PC-9 (cell line): ENCODE measurements at regions of chr3 and their contacts with region 1.

Region 1: GRCh38 chr3:177197041-177197727 is at the start of gene TBL1XR1:
- DNase-seq: peak; percentile 92 to 96
- H3K4me3 ChIP-seq: peak within 1 kb of the TSS; percentile 82
- H3K27ac ChIP-seq: peak within 1 kb of the TSS; percentile 97
- H3K4me1 ChIP-seq: peaks cover 44% of the 10 kb centered on the region
- H3K27me3 ChIP-seq: no peaks in the 10 kb centered on the region
- CTCF ChIP-seq: no peak
- total RNA-seq, gene TBL1XR1: 232 and 243 TPM in 2 replicates

Region 2: GRCh38 chr3:177050501-177051237 is 146.5 kb before region 1 on chr3:
- CTCF ChIA-PET with region 1: no interaction called
- POLR2A ChIA-PET with region 1: interaction called, 4 read pairs
- intact Hi-C with region 1: loop called (anchors 1 kb)
- DNase-seq: peak in 1 of 2 experiments; percentile 59
- H3K4me3 ChIP-seq: no peak overlapping the region
- H3K27ac ChIP-seq: peak overlapping the region; percentile 40
- H3K4me1 ChIP-seq: peaks cover 15% of the 10 kb centered on the region
- H3K27me3 ChIP-seq: no peaks in the 10 kb centered on the region
- CTCF ChIP-seq: peak; percentile 90

Region 3: DNA sequence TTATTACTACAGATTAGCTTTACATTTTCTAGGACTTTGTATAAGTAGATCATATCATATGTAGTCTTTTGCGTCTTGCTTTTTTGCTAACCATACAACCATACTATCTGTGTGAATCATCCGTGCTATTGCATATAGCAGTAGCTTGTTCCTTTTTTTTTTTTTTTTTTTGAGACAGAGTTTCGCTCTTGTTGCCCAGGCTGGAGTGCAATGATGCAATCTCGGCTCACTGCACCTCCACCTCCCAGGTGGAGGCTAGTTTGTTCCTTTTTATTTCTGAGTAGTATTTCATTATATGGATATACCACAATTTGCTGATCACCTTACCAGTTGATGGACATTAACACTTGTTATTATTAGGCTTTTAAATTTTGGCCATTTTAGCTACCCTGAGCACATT is 54.6 kb after region 1 on chr3:
- CTCF ChIA-PET with region 1: no interaction called
- POLR2A ChIA-PET with region 1: no interaction called
- intact Hi-C with region 1: no loop called
- DNase-seq: no peak
- H3K4me3 ChIP-seq: no peak overlapping the region
- H3K27ac ChIP-seq: no peak overlapping the region
- H3K4me1 ChIP-seq: peaks cover 18% of the 10 kb centered on the region
- H3K27me3 ChIP-seq: no peaks in the 10 kb centered on the region
- CTCF ChIP-seq: no peak

Region 4: DNA sequence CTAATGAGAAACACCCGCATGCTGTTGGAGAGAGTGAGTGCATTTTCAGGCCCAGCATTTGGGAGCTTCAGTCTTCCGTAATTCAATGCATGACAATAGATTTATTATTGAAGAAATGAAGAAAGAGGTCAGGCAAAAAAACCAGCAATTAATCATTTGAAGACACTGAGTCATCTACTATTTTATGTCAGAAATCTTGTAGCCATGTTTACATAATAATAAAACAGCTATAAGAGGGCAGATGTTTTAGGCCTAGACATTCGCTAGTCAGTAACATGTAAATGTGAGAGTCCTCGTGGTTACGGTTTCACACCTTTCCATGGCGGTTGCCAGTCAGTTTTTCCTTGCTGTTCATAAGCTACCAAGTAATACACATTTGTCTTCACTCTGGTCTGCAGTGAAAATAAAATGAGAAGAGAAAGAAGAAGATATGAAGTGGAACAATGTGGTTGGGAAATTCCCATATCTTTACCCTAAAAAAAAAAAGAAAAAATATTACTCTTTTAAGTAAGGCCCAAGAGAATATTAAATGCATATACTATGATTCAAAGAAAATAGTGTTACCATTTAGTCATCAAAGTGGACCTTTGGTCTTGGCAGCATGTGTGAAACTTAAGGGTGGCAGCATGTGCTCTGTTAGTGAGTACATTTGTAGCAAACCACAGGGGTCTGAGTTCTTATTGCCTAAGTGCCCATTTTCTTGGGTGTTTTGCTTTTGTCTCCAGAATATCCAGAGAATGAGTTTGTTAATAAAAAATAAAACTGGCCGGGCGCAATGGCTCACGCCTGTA is 140.6 kb after region 1 on chr3:
- CTCF ChIA-PET with region 1: no interaction called
- POLR2A ChIA-PET with region 1: interaction called, 16 read pairs
- intact Hi-C with region 1: no loop called
- DNase-seq: no peak
- H3K4me3 ChIP-seq: no peak overlapping the region
- H3K27ac ChIP-seq: no peak overlapping the region
- H3K4me1 ChIP-seq: peaks cover 56% of the 10 kb centered on the region
- H3K27me3 ChIP-seq: no peaks in the 10 kb centered on the region
- CTCF ChIP-seq: no peak

Region 5: GRCh38 chr3:177448987-177449975 is 252.1 kb after region 1 on chr3:
- CTCF ChIA-PET with region 1: interaction called, 3 read pairs
- POLR2A ChIA-PET with region 1: interaction called, 4 read pairs
- intact Hi-C with region 1: loop called (anchors 1 kb)
- DNase-seq: peak; percentile 82 to 99
- H3K4me3 ChIP-seq: peak overlapping the region; percentile 9; the same call in 1 of the 2 replicates
- H3K27ac ChIP-seq: peak overlapping the region; percentile 89
- H3K4me1 ChIP-seq: peaks cover 66% of the 10 kb centered on the region
- H3K27me3 ChIP-seq: no peaks in the 10 kb centered on the region
- CTCF ChIP-seq: no peak

Region 6: DNA sequence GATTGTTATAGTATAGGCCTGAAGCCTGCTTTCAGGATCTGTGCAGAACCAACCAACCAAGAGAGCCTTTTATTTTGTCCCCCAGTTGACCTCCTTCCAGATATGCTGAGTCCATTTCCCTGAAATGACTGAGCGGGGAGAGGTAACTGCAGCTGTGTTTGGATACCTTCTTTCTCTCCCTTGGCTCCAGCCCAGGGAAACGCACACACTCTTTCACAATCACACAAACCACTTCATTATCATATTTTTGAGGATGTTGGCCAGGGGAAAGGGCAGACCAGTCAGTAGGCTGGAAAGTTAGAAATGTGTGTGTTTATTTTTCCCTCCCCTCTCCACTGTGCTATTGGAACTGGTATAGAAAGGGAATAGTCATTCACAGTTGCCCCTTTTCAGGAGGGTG is 417.8 kb after region 1 on chr3:
- CTCF ChIA-PET with region 1: no interaction called
- POLR2A ChIA-PET with region 1: no interaction called
- intact Hi-C with region 1: loop called (anchors 5 kb)
- DNase-seq: peak; percentile 84 to 96
- H3K4me3 ChIP-seq: no peak overlapping the region
- H3K27ac ChIP-seq: peak overlapping the region; percentile 62
- H3K4me1 ChIP-seq: peaks cover 87% of the 10 kb centered on the region
- H3K27me3 ChIP-seq: no peaks in the 10 kb centered on the region
- CTCF ChIP-seq: no peak

Region 7: DNA sequence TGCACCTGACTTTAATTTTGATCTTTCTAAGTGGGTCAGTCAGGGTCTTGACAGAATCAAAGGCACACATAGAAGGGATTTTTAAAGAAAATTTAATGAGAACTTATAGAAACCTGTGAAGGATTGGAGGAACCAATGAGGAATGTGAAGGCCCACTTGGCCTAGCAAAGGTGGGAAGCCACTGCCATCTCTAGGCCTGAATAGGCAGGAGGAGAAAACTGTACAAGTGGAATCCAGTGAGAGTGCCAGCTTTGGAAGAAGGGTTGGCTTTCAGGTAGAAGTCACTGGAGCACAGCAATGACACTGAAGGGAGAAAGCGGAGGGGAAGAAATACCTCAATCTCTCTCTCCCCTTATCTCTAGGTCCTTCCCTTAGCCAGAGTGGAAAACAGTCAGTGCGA is 958.3 kb after region 1 on chr3:
- CTCF ChIA-PET with region 1: no interaction called
- POLR2A ChIA-PET with region 1: no interaction called
- intact Hi-C with region 1: loop called (anchors 10 kb)
- DNase-seq: no peak
- H3K4me3 ChIP-seq: no peak overlapping the region
- H3K27ac ChIP-seq: no peak overlapping the region
- H3K4me1 ChIP-seq: no peaks in the 10 kb centered on the region
- H3K27me3 ChIP-seq: no peaks in the 10 kb centered on the region
- CTCF ChIP-seq: peak; percentile 16; the same call in 1 of the 2 replicates